ENCODE measurements at regions of chr2 and their contacts with region 1.

Region 1: GRCh38 chr2:73246850-73247249 is 12.7 kb downstream of the CCT7 start:
- DNase-seq: no peak
- H3K4me3 ChIP-seq: no peak overlapping the region
- H3K27me3 ChIP-seq: no peaks in the 10 kb centered on the region
- CTCF ChIP-seq: no peak

Region 2: DNA sequence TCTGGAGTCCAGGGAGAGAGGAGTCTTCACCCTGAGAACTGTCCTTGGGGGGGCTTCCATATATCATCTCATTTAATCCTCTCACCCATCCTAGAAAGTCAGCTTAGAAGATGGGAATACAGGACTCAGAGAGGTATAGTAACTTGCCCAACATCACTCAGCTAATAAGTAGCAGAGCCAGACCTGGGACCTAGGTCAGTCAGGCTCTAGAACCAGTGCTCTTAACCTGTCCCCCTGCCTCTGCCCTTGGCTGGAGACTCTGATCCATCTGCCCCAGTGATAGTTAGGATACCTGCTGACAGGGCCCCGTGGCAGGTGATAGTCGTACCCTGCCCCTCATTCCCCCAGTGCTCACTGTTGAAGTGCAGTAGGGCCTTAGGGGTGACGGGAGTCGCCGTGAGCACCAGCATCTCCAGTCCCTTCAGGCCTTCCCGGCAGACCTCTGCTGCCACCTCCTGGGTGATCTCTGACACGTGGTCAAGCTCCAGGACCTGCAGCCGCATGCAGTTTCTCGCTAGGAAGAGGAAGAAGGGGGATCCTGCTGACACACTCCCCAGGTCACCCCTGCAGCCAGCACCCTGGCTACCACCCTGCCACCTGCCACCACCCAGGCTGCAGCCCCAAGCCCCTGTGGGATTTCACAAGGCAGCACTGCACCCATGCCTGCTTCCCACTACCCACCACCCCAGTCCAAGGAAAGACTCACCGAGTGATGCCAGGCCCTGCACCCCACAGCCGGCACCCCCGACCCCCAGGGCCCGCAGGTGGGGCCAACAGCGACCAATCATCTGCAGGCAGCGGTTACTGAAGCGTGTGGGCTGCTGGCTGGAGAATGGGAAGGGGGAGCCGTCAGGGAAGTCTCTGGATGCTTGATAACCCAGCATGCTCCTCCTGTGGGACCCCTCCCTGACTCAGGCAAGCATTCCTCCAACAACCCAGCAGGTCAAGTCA is 13.5 kb after region 1 on chr2:
- CTCF ChIA-PET with region 1: interaction called, 10 read pairs
- POLR2A ChIA-PET with region 1: no interaction called
- DNase-seq: no peak
- H3K4me3 ChIP-seq: no peak overlapping the region
- H3K27me3 ChIP-seq: no peaks in the 10 kb centered on the region
- CTCF ChIP-seq: peak; percentile 63

Region 3: DNA sequence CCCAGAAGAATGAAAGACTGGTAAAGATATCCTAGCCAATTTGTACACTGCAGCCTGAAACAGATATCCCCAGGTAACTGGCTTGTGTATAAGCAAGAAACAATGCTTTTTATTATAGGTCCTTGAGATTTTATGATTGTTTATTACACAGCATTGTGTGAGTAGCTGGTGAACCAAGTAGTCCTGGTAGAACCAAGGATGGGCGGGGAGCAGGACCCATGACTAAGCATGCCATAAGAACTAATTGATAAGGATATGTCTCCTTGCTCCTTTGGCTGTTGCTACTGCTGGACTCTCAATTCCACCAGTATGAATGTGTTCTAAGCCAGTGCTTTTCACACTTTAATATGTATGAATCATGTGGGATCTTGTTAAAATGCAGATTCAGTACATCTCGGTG is 126.5 kb after region 1 on chr2:
- CTCF ChIA-PET with region 1: no interaction called
- POLR2A ChIA-PET with region 1: no interaction called
- DNase-seq: no peak
- H3K4me3 ChIP-seq: no peak overlapping the region
- H3K27me3 ChIP-seq: no peaks in the 10 kb centered on the region; the same call in none of the 2 replicates
- CTCF ChIP-seq: no peak

Region 4: DNA sequence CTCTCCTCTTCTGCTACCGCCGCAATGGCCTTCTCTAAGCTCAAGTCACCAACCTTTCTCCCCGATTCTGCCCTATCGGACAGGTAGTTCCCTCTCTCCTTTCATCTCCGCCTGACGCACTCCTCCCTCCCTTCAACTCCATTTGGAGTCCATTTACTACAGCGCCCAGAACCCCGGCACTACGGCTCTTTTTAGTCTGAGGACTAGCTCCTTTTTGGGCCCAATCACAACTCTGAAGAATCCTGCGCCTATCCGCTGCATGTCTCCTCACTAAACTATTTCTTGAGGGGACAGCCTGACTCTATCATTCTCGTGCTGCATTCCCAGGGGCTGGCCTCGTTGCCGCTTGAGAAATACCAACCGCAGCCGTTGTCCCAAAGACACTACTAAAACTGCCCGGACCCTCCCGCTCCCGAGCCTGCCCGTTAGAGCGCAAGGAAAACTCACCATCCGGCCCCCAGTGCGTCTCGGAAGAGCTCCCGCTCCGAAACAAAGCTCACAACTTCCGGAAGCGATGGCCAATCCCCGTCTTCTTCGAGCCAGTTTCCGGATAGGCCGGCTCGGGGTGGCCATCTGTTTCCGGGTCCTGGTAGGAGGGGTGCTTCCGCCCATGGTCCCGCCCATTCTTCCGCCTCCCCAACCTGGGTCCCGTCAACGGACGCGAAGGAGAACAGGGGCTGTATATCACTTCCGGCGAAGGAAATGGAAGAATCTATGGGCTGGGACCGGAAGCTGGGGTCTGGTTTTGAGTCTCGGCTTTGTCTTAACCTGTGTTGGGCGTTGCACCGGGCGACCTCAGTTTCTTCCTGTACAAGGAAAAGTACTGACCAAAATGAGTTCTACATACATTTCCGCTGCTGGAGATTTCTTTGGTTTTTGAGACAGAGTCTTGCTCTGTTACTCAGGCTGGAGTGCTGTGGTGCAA is 490.3 kb after region 1 on chr2 and contains the start of gene TPRKB:
- CTCF ChIA-PET with region 1: no interaction called
- POLR2A ChIA-PET with region 1: no interaction called
- DNase-seq: peak; percentile 88
- H3K4me3 ChIP-seq: peak within 1 kb of the TSS; percentile 76
- H3K27me3 ChIP-seq: no peaks in the 10 kb centered on the region
- CTCF ChIP-seq: no peak
- polyA plus RNA-seq, gene TPRKB: 16.0 and 23.8 TPM in 2 replicates